Breast epithelium (tissue), 4 donors: ENCODE measurements at regions of chr15 and their contacts with region 1.

Region 1: GRCh38 chr15:67747921-67748320 is 77.4 kb upstream of the SKOR1 start:
- DNase-seq: no peak
- H3K4me3 ChIP-seq: no peak overlapping the region
- H3K27ac ChIP-seq: no peak overlapping the region
- H3K4me1 ChIP-seq: no peaks in the 10 kb centered on the region
- H3K27me3 ChIP-seq: no peaks in the 10 kb centered on the region
- CTCF ChIP-seq: no peak
- POLR2A ChIP-seq: no peak

Region 2: GRCh38 chr15:67707520-67708283 is 40.2 kb before region 1 on chr15:
- intact Hi-C with region 1: no loop called
- DNase-seq: no peak
- H3K4me3 ChIP-seq: no peak overlapping the region
- H3K27ac ChIP-seq: no peak overlapping the region
- H3K4me1 ChIP-seq: no peaks in the 10 kb centered on the region
- H3K27me3 ChIP-seq: no peaks in the 10 kb centered on the region
- CTCF ChIP-seq: no peak
- POLR2A ChIP-seq: no peak

Region 3: DNA sequence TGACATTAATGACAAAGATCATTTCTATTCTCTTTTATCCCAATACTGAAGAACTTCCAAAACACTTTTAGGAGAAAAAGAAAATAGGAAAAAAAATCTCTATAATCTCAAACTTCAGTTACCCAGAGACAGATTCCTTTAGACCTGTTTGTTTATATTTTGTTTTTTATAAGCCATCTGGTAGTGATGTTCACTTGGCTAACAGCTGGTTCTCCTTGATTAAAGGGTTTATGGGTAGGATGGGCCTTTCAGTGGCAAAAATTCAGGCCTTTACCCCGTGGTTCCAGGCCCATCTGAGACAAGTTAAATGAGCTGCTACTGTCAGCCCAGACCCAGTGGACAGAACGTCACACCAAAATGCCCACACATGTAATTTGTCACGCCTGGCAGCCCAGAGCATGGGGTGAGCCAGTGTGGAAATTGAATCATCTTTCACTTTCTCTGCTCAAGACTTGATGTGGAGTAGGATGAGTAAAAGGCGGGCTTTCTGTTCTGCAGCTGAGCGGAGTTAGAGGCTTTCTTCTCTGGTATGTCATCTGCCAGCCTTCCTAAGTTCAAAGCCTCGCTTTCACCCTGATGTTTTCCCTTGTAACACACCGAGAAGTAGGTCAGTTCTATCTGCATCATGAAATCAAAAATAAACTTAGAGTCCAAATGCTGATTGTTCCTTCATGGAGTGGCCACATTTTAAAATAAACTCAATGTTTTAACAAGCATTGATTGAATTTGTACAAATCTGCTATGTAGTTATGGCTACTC is 14.9 kb after region 1 on chr15:
- intact Hi-C with region 1: no loop called
- DNase-seq: no peak
- H3K4me3 ChIP-seq: no peak overlapping the region
- H3K27ac ChIP-seq: peak overlapping the region in 1 of 2 donors; percentile 28
- H3K4me1 ChIP-seq: no peaks in the 10 kb centered on the region
- H3K27me3 ChIP-seq: no peaks in the 10 kb centered on the region
- CTCF ChIP-seq: no peak
- POLR2A ChIP-seq: no peak

Region 4: GRCh38 chr15:67799801-67800205 is 51.9 kb after region 1 on chr15:
- intact Hi-C with region 1: loop called (anchors 2 kb)
- DNase-seq: no peak
- H3K4me3 ChIP-seq: no peak overlapping the region
- H3K27ac ChIP-seq: no peak overlapping the region
- H3K4me1 ChIP-seq: no peaks in the 10 kb centered on the region
- H3K27me3 ChIP-seq: no peaks in the 10 kb centered on the region
- CTCF ChIP-seq: no peak
- POLR2A ChIP-seq: no peak